H1 (cell line): ENCODE measurements at regions of chr12 and their contacts with region 1.

Region 1: GRCh38 chr12:24931666-24932405 is 17.1 kb downstream of the BCAT1 start:
- DNase-seq: no peak
- H3K4me3 ChIP-seq: no peak overlapping the region
- H3K27ac ChIP-seq: no peak overlapping the region
- H3K4me1 ChIP-seq: peaks cover 1 to 21% (median 9%) of the 10 kb centered on the region in 4 experiments; a peak in 4 of 7 replicates
- H3K27me3 ChIP-seq: no peaks in the 10 kb centered on the region
- CTCF ChIP-seq: no peak
- EP300 ChIP-seq: no peak
- POLR2A ChIP-seq: no peak
- RAD21 ChIP-seq: no peak

Region 2: DNA sequence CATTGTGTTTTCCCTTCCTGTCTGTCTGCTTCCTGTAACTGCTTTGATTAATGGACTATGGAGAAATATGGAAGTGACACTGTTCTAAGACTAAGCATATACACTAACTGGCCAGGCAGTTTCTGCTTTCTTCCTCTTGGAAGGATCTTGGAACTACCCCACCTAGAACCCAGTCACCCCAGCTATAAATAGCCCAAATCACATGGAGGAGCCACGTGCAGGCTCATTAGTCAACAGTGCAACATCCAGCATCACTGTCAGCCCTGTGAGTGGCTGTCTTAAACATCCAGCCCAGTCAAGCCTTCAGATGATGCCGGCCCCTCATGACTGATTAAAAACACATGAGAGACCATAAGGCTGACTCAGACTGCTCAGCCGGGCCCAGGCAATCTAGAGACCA is 22.2 kb before region 1 on chr12:
- CTCF ChIA-PET with region 1: no interaction called
- POLR2A ChIA-PET with region 1: interaction called, 11 read pairs
- DNase-seq: peak in 1 of 2 experiments; percentile 37
- H3K4me3 ChIP-seq: no peak overlapping the region
- H3K27ac ChIP-seq: no peak overlapping the region
- H3K4me1 ChIP-seq: peaks cover 0 to 14% (median 8%) of the 10 kb centered on the region in 4 experiments; a peak in 4 of 7 replicates
- H3K27me3 ChIP-seq: no peaks in the 10 kb centered on the region
- CTCF ChIP-seq: no peak
- EP300 ChIP-seq: no peak
- POLR2A ChIP-seq: no peak
- RAD21 ChIP-seq: no peak

Region 3: DNA sequence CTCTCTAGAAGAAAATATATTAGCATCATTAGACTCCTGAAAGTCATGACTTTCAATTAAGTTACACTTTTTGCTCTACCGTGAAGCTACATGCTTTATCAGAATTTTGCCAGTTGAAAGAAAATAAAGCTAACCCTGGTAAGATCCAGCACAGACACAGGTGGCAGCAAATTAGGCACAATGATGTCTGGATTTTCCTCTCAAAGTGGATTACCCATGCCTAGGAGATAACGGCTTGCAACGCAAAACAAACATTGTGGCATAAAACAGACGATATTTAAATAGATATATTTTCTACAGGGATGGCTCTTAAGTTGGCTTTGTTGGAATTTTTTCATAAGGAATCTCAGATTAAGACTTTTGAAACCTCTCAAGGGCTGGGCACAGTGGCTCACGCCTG is 16.3 kb before region 1 on chr12:
- CTCF ChIA-PET with region 1: interaction called, 3 read pairs
- POLR2A ChIA-PET with region 1: interaction called, 18 read pairs
- DNase-seq: no peak
- H3K4me3 ChIP-seq: no peak overlapping the region
- H3K27ac ChIP-seq: no peak overlapping the region
- H3K4me1 ChIP-seq: peaks cover 0 to 3% (median 0%) of the 10 kb centered on the region in 4 experiments; a peak in 4 of 7 replicates
- H3K27me3 ChIP-seq: no peaks in the 10 kb centered on the region
- CTCF ChIP-seq: no peak
- EP300 ChIP-seq: no peak
- POLR2A ChIP-seq: no peak
- RAD21 ChIP-seq: no peak

Region 4: DNA sequence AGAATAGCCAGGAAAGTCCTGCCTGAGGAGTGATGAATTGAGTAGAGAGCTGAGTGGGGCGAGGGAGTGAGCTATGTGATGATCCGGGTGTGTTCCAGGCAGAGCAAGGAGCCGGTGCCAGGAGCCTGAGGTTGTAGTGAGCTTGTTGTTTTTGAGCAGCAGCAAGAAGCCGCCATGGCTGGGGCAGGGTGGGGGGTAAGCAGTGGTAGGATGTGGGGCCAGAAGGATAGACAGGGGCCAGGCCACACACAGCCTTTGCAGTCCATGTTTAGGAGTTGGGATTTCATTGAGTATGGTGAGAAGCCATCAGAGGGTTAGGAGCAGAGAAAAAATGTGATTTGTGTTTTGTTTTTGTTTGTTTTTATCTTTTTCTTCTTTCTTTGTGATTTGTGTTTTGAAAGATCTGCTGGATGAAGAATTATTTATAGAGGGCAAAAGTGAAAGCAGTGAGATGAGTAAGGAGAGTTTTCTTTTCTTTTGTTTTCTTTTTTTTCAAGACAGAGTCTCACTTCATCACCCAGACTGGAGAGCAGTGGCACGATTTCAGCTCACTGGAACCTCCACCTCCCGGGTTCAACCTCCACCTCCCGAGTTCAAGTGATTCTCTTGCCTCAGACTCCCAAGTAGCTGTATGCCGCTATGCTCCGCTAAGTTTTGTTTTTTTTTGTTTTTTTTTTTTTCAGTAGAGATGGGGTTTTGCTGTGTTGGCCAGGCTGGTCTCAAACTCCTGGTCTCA is 109.3 kb after region 1 on chr12:
- CTCF ChIA-PET with region 1: no interaction called
- POLR2A ChIA-PET with region 1: no interaction called
- DNase-seq: no peak
- H3K4me3 ChIP-seq: no peak overlapping the region
- H3K27ac ChIP-seq: no peak overlapping the region
- H3K4me1 ChIP-seq: no peaks in the 10 kb centered on the region
- H3K27me3 ChIP-seq: no peaks in the 10 kb centered on the region
- CTCF ChIP-seq: no peak
- EP300 ChIP-seq: no peak
- POLR2A ChIP-seq: no peak
- RAD21 ChIP-seq: no peak

Region 5: GRCh38 chr12:25058658-25059058 is 126.8 kb after region 1 on chr12:
- CTCF ChIA-PET with region 1: no interaction called
- POLR2A ChIA-PET with region 1: no interaction called
- DNase-seq: no peak
- H3K4me3 ChIP-seq: no peak overlapping the region
- H3K27ac ChIP-seq: no peak overlapping the region
- H3K4me1 ChIP-seq: peaks cover 0 to 2% (median 0%) of the 10 kb centered on the region in 4 experiments; a peak in 1 of 7 replicates
- H3K27me3 ChIP-seq: no peaks in the 10 kb centered on the region
- CTCF ChIP-seq: no peak
- EP300 ChIP-seq: no peak
- POLR2A ChIP-seq: no peak
- RAD21 ChIP-seq: no peak